CD4-positive, alpha-beta memory T cell (primary cell): ENCODE measurements at regions of chr3 and their contacts with region 1.

Region 1: DNA sequence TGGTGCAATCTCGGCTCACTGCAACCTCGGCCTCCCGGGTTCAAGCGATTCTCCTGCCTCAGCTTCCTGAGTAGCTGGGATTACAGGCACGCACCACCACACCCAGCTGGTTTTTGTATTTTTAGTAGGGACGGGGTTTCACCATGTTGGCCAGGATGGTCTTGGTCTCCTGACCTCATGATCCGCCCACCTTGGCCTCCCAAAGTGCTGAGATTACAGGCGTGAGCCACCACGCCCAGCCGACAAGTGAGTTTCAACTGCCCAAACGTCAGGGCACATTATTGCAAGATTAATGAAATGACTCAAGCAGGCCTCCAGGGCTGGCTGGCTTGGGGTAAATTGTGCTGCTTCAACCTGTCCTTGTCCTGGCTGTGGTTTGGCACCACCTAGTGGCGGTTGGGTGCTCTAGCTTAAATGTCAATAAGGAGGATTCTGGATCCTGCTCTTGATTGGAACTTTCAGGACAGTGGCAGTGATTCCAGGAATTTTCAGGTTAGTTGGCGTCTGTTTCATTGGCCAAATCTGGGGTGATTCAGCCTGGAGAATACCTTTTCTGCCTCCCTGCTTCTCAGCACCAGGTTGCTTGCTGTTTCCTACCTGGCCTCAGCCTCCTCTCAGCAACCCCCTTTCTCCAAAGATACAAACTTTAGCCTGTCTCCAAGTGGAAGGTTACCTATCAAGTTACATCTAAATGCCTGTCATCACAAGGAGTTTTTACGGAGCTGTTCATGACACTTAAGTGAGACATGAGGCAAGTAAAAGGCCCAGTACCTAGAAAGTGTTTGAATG is 32.4 kb upstream of the SACM1L start:
- DNase-seq: peak; percentile 78 to 87 (median 80)
- H3K4me3 ChIP-seq: no peak overlapping the region
- H3K4me3 Mint-ChIP-seq: no peak overlapping the region
- H3K27ac ChIP-seq: no peak overlapping the region
- H3K27ac Mint-ChIP-seq: peak overlapping the region in 2 of 7 donors; percentile 23 to 61
- H3K4me1 ChIP-seq: peaks cover 6% of the 10 kb centered on the region
- H3K4me1 Mint-ChIP-seq: peaks cover 13 to 23% (median 16%) of the 10 kb centered on the region in 4 donors
- H3K27me3 ChIP-seq: no peaks in the 10 kb centered on the region
- H3K27me3 Mint-ChIP-seq: no peaks in the 10 kb centered on the region

Region 2: GRCh38 chr3:45037734-45038455 is 618.9 kb before region 1 on chr3:
- CTCF ChIA-PET with region 1: interaction called, 80 read pairs
- POLR2A ChIA-PET with region 1: no interaction called
- intact Hi-C with region 1: loop called (anchors 1 kb)
- DNase-seq: peak; percentile 88 to 93 (median 91)
- H3K4me3 ChIP-seq: no peak overlapping the region
- H3K4me3 Mint-ChIP-seq: peak overlapping the region in 6 of 8 donors; percentile 54 to 86 (median 78)
- H3K27ac ChIP-seq: no peak overlapping the region
- H3K27ac Mint-ChIP-seq: peak overlapping the region in 3 of 7 donors; percentile 51 to 78 (median 72)
- H3K4me1 ChIP-seq: peaks cover 32% of the 10 kb centered on the region
- H3K4me1 Mint-ChIP-seq: peaks cover 24 to 66% (median 43%) of the 10 kb centered on the region in 4 donors
- H3K27me3 ChIP-seq: no peaks in the 10 kb centered on the region
- H3K27me3 Mint-ChIP-seq: peaks cover 10 to 34% of the 10 kb centered on the region in 2 donors

Region 3: GRCh38 chr3:45381168-45381852 is 275.5 kb before region 1 on chr3:
- CTCF ChIA-PET with region 1: no interaction called
- POLR2A ChIA-PET with region 1: no interaction called
- intact Hi-C with region 1: no loop called
- DNase-seq: no peak
- H3K4me3 ChIP-seq: no peak overlapping the region
- H3K4me3 Mint-ChIP-seq: no peak overlapping the region
- H3K27ac ChIP-seq: no peak overlapping the region
- H3K27ac Mint-ChIP-seq: no peak overlapping the region
- H3K4me1 ChIP-seq: no peaks in the 10 kb centered on the region
- H3K4me1 Mint-ChIP-seq: peaks cover 0 to 17% (median under 1%) of the 10 kb centered on the region in 4 donors
- H3K27me3 ChIP-seq: peaks cover 9% of the 10 kb centered on the region
- H3K27me3 Mint-ChIP-seq: peaks cover 6 to 9% of the 10 kb centered on the region in 2 donors

Region 4: GRCh38 chr3:45507820-45508317 is 148.9 kb before region 1 on chr3:
- CTCF ChIA-PET with region 1: interaction called, 471 read pairs
- POLR2A ChIA-PET with region 1: interaction called, 4 read pairs
- intact Hi-C with region 1: loop called (anchors 1 kb)
- DNase-seq: no peak
- H3K4me3 ChIP-seq: no peak overlapping the region
- H3K4me3 Mint-ChIP-seq: no peak overlapping the region
- H3K27ac ChIP-seq: no peak overlapping the region
- H3K27ac Mint-ChIP-seq: no peak overlapping the region
- H3K4me1 ChIP-seq: peaks cover 10% of the 10 kb centered on the region
- H3K4me1 Mint-ChIP-seq: peaks cover 0 to 4% (median 2%) of the 10 kb centered on the region in 4 donors
- H3K27me3 ChIP-seq: no peaks in the 10 kb centered on the region
- H3K27me3 Mint-ChIP-seq: no peaks in the 10 kb centered on the region

Region 5: DNA sequence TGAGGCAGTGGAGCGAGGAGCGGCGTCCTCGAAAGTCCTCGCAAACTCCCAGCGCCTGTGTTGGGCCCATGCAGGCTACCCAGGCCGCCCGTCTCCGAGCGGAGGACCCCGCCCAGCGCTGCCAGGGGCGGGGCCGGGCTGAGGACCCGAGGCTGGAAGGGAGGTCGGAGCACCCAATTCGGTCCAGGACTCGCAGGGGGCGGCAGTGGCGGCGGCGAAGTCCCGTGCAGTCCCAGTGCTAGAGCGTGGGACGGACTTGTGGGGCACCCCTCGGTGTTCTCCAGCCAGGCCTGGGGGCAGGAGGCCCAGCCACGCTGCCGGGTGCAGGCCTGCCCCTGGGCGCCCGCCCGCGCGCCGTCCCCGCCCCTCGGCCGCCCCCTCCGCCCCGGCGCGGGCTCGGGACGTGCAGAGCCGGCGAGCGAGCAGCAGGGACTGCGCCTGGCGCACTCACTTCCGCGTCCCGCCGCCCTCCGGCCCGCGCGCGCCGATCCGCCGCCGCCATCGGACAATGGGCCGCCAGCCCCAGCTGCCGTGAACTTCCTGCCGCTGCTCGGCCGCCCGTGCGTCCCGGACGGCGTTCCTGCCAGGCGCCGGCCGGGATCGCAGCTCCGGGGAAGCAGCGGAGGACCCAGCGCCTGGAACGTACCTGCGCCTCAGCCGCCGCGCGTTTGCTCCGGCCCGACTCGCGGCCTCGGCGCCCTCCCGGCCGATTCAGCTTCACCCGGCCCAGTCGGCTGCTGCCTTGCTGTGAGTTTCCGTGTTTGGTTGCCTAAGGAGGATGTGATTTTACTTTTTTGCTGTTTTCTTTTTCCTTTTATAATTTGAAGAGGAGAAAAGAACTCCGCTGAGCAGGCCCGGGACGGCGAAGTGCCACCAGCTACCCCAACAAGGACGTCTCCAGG is 62.8 kb before region 1 on chr3:
- CTCF ChIA-PET with region 1: interaction called, 42 read pairs
- POLR2A ChIA-PET with region 1: interaction called, 6 read pairs
- intact Hi-C with region 1: loop called (anchors 1 kb)
- DNase-seq: peak; percentile 61 to 78 (median 67)
- H3K4me3 ChIP-seq: peak overlapping the region; percentile 70 to 76
- H3K4me3 Mint-ChIP-seq: peak overlapping the region; percentile 89 to 99 (median 94)
- H3K27ac ChIP-seq: peak overlapping the region; percentile 58
- H3K27ac Mint-ChIP-seq: peak overlapping the region; percentile 81 to 98 (median 90)
- H3K4me1 ChIP-seq: peaks cover 59% of the 10 kb centered on the region
- H3K4me1 Mint-ChIP-seq: peaks cover 42 to 60% (median 52%) of the 10 kb centered on the region in 4 donors
- H3K27me3 ChIP-seq: no peaks in the 10 kb centered on the region
- H3K27me3 Mint-ChIP-seq: no peaks in the 10 kb centered on the region

Region 6: DNA sequence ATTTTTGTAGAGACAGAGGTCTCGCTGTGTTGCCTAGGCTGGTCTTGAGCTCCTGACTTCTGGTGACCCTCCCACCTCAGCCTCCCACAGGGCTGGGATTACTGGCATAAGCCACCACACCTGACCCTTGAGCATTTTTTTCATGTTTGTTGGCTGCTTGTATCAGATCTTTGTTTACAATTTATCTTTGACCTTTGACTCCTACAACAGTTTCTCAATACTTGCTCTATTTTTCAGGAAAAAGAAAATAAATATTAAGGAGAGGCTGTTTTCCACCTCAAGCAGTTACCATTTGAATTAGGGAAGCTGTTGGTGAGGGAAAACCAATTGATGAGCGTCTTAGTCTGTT is 17.8 kb before region 1 on chr3:
- CTCF ChIA-PET with region 1: interaction called, 17 read pairs
- POLR2A ChIA-PET with region 1: interaction called, 3 read pairs
- intact Hi-C with region 1: no loop called
- DNase-seq: no peak
- H3K4me3 ChIP-seq: no peak overlapping the region
- H3K4me3 Mint-ChIP-seq: no peak overlapping the region
- H3K27ac ChIP-seq: no peak overlapping the region
- H3K27ac Mint-ChIP-seq: no peak overlapping the region
- H3K4me1 ChIP-seq: no peaks in the 10 kb centered on the region
- H3K4me1 Mint-ChIP-seq: peaks cover 0 to 14% (median 7%) of the 10 kb centered on the region in 4 donors
- H3K27me3 ChIP-seq: no peaks in the 10 kb centered on the region
- H3K27me3 Mint-ChIP-seq: no peaks in the 10 kb centered on the region

Region 7: DNA sequence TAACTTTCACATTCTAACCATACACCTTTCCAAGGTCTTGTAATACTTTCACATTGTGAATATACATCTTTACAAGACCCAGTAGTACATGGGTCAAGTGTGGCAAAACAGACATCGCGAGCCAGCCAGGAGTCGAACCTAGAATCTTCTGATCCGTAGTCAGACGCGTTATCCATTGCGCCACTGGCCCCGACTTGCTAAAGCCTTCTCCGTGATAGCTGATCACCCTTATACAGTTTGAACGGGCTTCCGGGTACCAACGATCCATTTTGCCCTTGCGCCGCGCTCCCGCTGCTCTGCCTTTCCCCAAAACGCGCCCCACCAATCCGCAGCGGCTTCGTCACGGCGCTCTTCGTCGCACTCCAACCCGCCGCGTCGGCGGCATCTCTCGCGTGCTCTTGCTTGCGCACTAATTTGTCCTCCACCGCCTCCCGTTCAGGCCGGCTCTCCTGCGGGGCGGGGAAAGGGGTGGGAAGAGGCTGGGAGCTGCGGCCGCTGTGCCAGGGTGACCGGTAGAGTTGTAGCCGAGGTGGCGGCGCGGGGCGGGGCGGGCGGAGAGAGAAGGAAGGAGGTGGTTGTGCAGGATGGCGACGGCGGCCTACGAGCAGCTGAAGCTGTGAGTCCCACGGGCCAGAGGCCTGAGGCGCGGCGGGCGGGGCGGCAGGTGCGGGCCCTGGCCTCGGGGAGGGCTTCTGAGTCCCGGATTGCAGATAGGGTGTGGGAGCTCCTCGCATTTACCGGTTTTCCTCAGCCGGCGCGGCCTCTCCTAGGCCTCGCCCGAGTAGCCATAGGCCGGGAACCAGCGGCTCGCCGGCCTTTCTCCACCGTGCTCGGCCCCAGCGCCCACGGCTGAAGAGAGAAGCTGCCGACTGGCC is 32.4 kb after region 1 on chr3 and contains the start of gene SACM1L:
- CTCF ChIA-PET with region 1: interaction called, 53 read pairs
- POLR2A ChIA-PET with region 1: interaction called, 10 read pairs
- intact Hi-C with region 1: no loop called
- DNase-seq: peak; percentile 96 to 97 (median 97)
- H3K4me3 ChIP-seq: peak within 1 kb of the TSS; percentile 84 to 97
- H3K4me3 Mint-ChIP-seq: peak within 1 kb of the TSS; percentile 86 to 99 (median 93)
- H3K27ac ChIP-seq: peak within 1 kb of the TSS; percentile 94
- H3K27ac Mint-ChIP-seq: peak within 1 kb of the TSS; percentile 91 to 100 (median 99)
- H3K4me1 ChIP-seq: peaks cover 47% of the 10 kb centered on the region
- H3K4me1 Mint-ChIP-seq: peaks cover 41 to 67% (median 56%) of the 10 kb centered on the region in 4 donors
- H3K27me3 ChIP-seq: no peaks in the 10 kb centered on the region
- H3K27me3 Mint-ChIP-seq: peaks cover 2 to 5% of the 10 kb centered on the region in 2 donors
- total RNA-seq, gene SACM1L: 95.7 to 104 TPM

Region 8: GRCh38 chr3:45986303-45986982 is 329.7 kb after region 1 on chr3:
- CTCF ChIA-PET with region 1: no interaction called
- POLR2A ChIA-PET with region 1: no interaction called
- intact Hi-C with region 1: no loop called
- DNase-seq: no peak
- H3K4me3 ChIP-seq: no peak overlapping the region
- H3K4me3 Mint-ChIP-seq: peak overlapping the region in 1 of 8 donors; percentile 39
- H3K27ac ChIP-seq: no peak overlapping the region
- H3K27ac Mint-ChIP-seq: peak overlapping the region in 6 of 7 donors; percentile 39 to 90 (median 59)
- H3K4me1 ChIP-seq: peaks cover 61% of the 10 kb centered on the region
- H3K4me1 Mint-ChIP-seq: peaks cover 40 to 87% (median 60%) of the 10 kb centered on the region in 4 donors
- H3K27me3 ChIP-seq: no peaks in the 10 kb centered on the region
- H3K27me3 Mint-ChIP-seq: no peaks in the 10 kb centered on the region